Activated naive CD4-positive, alpha-beta T cell treated with anti-CD3 and anti-CD28 coated beads, Interleukin-2, amount 10 ng/mL, durations not matched to agents 7 days and 5 days (primary cell): ENCODE measurements at regions of chr19 and their contacts with region 1.

Region 1: GRCh38 chr19:51473009-51473707 is 5.2 kb upstream of the CEACAM18 start:
- DNase-seq: peak; percentile 87
- H3K4me3 Mint-ChIP-seq: no peak overlapping the region
- H3K27ac Mint-ChIP-seq: no peak overlapping the region
- H3K4me1 Mint-ChIP-seq: no peaks in the 10 kb centered on the region
- H3K27me3 Mint-ChIP-seq: peaks cover 28% of the 10 kb centered on the region

Region 2: DNA sequence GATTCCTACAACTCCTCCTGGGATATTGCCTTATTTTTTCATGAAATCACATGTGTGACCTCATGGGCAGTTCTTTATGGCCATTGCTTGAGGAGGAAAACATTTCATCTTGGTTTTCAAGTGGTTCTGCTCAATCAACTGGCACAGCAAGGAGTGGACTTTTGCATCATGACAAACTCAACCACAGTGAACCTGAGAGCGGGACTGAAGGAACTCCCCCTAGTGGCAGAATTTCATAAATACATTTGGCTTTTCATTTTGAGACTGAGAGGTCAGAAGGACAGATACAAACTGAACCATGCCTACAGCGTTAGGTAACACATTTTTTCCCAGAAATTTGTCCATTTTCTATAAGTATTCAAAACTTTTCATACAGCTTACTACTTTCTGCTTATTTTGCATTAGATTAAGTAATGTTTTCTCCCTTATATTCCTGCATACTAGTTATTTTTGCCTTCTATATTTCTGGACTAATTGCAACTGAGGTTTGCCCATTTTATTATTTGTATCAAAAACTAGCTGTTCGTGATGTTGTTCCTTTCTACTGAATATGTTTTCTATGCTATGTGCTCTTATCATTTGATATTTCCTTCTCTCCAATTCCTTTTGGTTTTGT is 41.8 kb after region 1 on chr19:
- CTCF ChIA-PET with region 1: interaction called, 70 read pairs
- DNase-seq: peak; percentile 33
- H3K4me3 Mint-ChIP-seq: no peak overlapping the region
- H3K27ac Mint-ChIP-seq: no peak overlapping the region
- H3K4me1 Mint-ChIP-seq: no peaks in the 10 kb centered on the region
- H3K27me3 Mint-ChIP-seq: peaks cover 25% of the 10 kb centered on the region

Region 3: DNA sequence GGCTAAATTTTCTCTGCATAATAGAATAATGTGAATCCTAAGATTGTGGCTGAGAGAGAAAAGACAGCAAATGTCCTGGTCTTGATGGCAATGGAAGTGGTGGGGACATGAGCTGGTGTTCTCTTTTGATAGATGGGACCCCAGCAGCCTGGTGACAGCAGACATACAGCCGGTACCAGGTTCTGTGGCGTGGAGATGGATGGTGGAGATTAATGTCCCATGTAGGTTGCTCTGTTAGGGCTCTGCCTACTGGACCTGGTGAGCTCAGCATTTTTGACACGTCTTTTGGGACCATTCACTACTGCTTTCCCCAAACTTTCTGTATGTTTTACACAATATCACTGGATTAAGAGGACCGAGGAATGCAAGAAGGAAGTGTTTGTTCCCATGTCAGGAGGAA is 181.6 kb after region 1 on chr19:
- CTCF ChIA-PET with region 1: interaction called, 25 read pairs
- DNase-seq: no peak
- H3K4me3 Mint-ChIP-seq: no peak overlapping the region
- H3K27ac Mint-ChIP-seq: no peak overlapping the region
- H3K4me1 Mint-ChIP-seq: peaks cover 5% of the 10 kb centered on the region
- H3K27me3 Mint-ChIP-seq: peaks cover 9% of the 10 kb centered on the region

Region 4: DNA sequence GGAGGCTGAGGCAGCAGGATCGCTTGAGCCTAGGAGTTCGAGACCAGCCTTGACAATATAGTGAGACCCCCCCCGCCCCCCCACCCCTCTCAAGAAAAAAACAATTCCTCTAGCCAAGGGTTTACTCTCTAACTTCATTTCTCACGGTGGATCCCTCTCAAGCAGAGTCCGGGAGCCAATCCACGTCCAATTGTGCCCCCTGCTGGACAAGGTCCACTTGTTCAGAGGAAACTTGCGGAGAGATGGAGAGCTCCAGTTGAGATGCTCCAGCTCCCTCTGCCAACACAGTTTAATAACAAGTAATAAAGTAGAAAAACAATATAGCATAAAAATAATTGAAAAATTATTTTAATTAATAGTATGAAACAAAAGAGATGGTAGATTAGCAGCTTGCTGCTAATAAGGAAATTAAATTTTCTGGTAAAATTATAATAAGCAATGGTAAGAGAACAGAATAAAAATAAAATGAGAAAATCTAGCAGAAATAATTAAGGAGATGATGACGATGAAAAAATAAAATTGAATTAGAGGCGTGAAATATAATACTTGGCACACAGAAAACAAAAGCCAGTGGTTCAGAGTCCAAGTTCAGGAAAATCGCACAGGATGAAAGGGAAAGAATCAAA is 187.9 kb after region 1 on chr19:
- CTCF ChIA-PET with region 1: interaction called, 25 read pairs
- DNase-seq: peak; percentile 75
- H3K4me3 Mint-ChIP-seq: no peak overlapping the region
- H3K27ac Mint-ChIP-seq: no peak overlapping the region
- H3K4me1 Mint-ChIP-seq: peaks cover 5% of the 10 kb centered on the region
- H3K27me3 Mint-ChIP-seq: peaks cover 18% of the 10 kb centered on the region

Region 5: DNA sequence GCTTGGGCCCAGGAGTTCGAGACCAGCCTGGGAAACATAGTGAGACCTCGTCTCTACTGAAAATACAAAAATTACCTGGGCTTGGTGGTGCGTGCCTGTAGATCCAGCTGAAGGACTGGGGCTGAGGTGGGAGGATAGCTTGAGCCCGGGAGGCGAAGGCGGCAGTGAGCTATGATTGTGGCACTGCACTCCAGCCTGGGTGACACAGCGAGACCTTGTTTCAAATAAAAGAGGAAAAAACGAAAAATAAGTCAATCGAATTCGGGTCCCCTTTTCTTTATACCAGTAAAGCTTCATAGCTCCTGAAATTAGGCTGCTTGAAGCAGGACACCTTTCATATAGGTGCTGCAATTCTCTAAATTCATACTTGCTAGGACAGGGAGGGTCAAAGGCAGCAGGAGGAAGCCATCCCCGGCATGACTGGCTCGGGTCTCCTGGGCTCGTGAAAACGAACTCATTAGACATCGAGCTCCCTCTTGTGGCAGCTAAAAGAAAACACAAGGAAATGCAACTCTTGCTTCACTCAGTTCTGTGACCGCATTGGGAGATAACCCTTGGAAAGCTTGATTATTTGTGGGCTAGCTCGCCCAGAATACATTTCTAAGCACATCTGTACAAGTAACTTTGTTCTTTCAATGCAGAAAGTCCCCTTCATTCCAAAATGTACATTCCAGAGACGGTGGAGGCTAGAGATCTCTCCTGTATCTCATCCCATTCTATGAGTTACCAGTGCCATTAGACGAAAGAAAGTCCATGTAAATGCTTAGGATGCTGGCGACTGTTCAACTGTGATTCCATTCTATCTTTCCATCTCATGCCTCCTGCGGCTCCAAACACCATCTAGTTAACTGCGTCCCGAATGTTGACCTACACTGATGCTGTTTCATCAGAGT is 304.7 kb after region 1 on chr19:
- CTCF ChIA-PET with region 1: interaction called, 12 read pairs
- DNase-seq: peak; percentile 45
- H3K4me3 Mint-ChIP-seq: no peak overlapping the region
- H3K27ac Mint-ChIP-seq: no peak overlapping the region
- H3K4me1 Mint-ChIP-seq: no peaks in the 10 kb centered on the region
- H3K27me3 Mint-ChIP-seq: peaks cover 11% of the 10 kb centered on the region